ENCODE measurements at regions of chr9 and their contacts with region 1.

Region 1: DNA sequence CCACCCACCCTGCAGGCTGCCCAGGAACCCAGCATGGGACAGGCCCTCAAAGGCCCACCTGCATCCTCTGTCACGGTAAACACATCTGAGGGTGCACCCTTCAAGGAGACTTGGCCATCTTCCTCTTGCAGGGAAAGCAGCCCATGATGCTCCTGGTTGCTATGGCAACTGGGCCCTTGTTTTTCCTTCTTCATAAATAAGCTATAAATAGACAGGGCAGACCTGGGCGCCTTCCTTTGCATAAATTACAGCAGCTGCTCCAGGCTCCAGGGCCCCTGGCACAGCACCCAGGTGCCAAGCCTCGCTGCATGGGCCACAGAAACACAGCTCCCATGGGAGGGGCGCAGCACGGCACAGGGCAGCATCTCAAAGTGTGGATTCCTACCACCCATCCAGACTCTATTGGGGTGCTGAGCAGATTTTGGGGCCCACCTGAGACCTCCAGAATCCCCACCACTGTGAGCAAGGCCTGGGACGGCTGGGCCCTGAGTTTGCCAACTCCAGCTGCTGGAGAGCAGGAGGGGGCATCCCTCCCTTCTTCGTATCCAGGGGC is 5.8 kb upstream of the PSMB7 start:
- DNase-seq: no peak
- H3K4me3 ChIP-seq: no peak overlapping the region
- H3K27ac ChIP-seq: no peak overlapping the region
- H3K4me1 ChIP-seq: peaks cover 0 to 2% (median 0%) of the 10 kb centered on the region in 4 experiments; a peak in 3 of 7 replicates
- H3K27me3 ChIP-seq: peaks cover 0 to 3% (median 0%) of the 10 kb centered on the region in 4 experiments; a peak in 2 of 7 replicates
- CTCF ChIP-seq: no peak
- EP300 ChIP-seq: no peak
- POLR2A ChIP-seq: no peak
- RAD21 ChIP-seq: no peak

Region 2: GRCh38 chr9:124441291-124441690 is 20.2 kb after region 1 on chr9:
- CTCF ChIA-PET with region 1: interaction called, 87 read pairs
- POLR2A ChIA-PET with region 1: interaction called, 5 read pairs
- DNase-seq: no peak
- H3K4me3 ChIP-seq: no peak overlapping the region
- H3K27ac ChIP-seq: no peak overlapping the region
- H3K4me1 ChIP-seq: no peaks in the 10 kb centered on the region
- H3K27me3 ChIP-seq: no peaks in the 10 kb centered on the region; a peak in 1 of 7 replicates
- CTCF ChIP-seq: no peak
- EP300 ChIP-seq: no peak
- POLR2A ChIP-seq: no peak
- RAD21 ChIP-seq: no peak

Region 3: DNA sequence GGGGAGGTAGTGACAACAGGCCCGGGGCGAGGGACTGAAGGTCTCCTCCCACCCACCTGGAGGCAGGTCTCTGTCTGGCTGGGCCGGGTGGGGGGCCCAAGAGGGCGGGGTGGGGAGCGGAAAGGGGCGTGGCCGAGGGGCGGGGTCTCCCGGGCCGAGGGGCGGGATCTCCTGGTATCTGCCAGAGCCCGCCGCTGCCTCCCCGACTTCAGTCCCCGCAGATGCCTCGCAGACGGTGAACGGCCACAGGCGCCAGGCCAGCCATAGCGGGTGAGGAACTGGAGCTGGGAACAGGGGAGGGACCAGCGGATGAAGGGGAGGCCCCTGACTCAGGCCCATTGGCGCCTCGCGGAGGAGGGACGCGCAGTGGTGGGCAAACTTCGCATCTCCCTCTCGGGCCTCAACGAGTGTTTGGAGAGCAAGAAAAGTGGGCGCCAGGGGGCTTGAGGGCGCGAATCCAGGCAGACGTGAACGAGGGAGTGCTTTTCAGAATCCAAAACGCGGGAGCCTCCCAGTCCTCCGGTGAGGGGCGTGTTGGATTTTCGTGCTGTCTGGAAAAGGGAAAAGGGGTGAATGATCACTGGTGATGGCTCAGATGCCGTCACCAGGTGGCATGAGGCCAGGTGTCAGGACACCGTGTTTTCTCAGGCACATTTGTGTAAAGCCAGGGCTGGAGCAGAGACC is 29.3 kb after region 1 on chr9 and contains the start of gene ADGRD2:
- CTCF ChIA-PET with region 1: interaction called, 21 read pairs
- POLR2A ChIA-PET with region 1: no interaction called
- DNase-seq: peak; percentile 70 to 96
- H3K4me3 ChIP-seq: peak within 1 kb of the TSS; percentile 20 to 63 (median 42)
- H3K27ac ChIP-seq: no peak within 1 kb of the TSS; the same call in 1 of the 2 replicates
- H3K4me1 ChIP-seq: peaks cover 0 to 20% (median 14%) of the 10 kb centered on the region in 4 experiments; a peak in 6 of 7 replicates
- H3K27me3 ChIP-seq: peaks cover 10 to 33% (median 25%) of the 10 kb centered on the region in 4 experiments
- CTCF ChIP-seq: no peak
- EP300 ChIP-seq: no peak
- POLR2A ChIP-seq: peak in 1 of 2 experiments; percentile 69; a peak in 2 of 3 replicates
- RAD21 ChIP-seq: no peak; a peak in 1 of 4 replicates
- total RNA-seq, gene ADGRD2: 1.1 and 1.4 TPM in 2 replicates

Region 4: GRCh38 chr9:124475158-124475867 is 54.2 kb after region 1 on chr9:
- CTCF ChIA-PET with region 1: interaction called, 43 read pairs
- POLR2A ChIA-PET with region 1: no interaction called
- DNase-seq: no peak
- H3K4me3 ChIP-seq: no peak overlapping the region
- H3K27ac ChIP-seq: no peak overlapping the region
- H3K4me1 ChIP-seq: peaks cover 3 to 28% (median 21%) of the 10 kb centered on the region in 4 experiments
- H3K27me3 ChIP-seq: peaks cover 8 to 35% (median 32%) of the 10 kb centered on the region in 4 experiments
- CTCF ChIP-seq: peak in 2 of 3 experiments; percentile 64 to 69; a peak in 3 of 4 replicates
- EP300 ChIP-seq: no peak
- POLR2A ChIP-seq: no peak
- RAD21 ChIP-seq: peak; percentile 78 to 85

Region 5: GRCh38 chr9:124480621-124480981 is 59.5 kb after region 1 on chr9:
- CTCF ChIA-PET with region 1: interaction called, 43 read pairs
- POLR2A ChIA-PET with region 1: no interaction called
- DNase-seq: peak; percentile 44 to 80
- H3K4me3 ChIP-seq: no peak overlapping the region
- H3K27ac ChIP-seq: no peak overlapping the region
- H3K4me1 ChIP-seq: peaks cover 4 to 36% (median 30%) of the 10 kb centered on the region in 4 experiments
- H3K27me3 ChIP-seq: peaks cover 8 to 40% (median 38%) of the 10 kb centered on the region in 4 experiments
- CTCF ChIP-seq: peak in 2 of 3 experiments; percentile 71 to 79; a peak in 3 of 4 replicates
- EP300 ChIP-seq: no peak
- POLR2A ChIP-seq: no peak
- RAD21 ChIP-seq: peak; percentile 56 to 60

Region 6: DNA sequence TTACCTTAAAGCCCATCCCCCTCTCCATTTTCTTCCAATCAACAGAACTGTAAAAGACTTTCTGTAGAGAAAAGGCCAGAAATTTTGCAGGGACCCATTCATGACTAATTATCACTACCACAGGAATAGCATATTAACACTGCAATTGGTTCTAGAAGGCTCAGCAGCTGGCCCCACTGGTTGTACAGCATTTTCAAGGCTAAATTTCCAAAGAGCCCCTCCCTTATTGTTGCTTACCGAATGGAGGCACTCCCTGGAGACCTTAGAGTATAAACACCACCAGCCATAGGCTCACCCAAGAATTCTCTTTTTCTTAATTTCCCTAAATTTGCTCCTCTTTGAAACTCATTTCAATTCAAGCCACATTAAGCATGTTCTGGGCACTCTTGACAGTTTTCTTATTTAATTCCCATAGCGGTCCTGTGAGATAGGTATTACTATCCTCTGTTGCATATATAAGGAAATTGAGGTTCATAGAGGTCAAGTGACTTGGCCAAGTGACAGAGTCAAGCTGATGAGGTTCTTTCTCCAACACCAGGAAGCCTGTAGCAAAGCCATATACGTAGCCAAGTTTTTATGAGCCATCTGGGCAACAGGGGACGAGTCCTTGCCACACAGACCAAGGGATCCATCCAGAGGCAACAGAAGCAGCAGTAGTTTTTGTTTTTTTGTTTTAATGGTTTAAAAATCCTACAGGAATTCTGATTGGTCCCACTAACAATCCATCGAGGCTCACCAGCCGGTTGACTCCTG is 170.0 kb after region 1 on chr9:
- CTCF ChIA-PET with region 1: no interaction called
- POLR2A ChIA-PET with region 1: no interaction called
- DNase-seq: no peak
- H3K4me3 ChIP-seq: no peak overlapping the region; a peak in 1 of 8 replicates
- H3K27ac ChIP-seq: 0 out of 2 replicates have a peak overlapping the region, but pooled peaks have one; percentile 8
- H3K4me1 ChIP-seq: peaks cover 6 to 44% (median 25%) of the 10 kb centered on the region in 4 experiments
- H3K27me3 ChIP-seq: no peaks in the 10 kb centered on the region
- CTCF ChIP-seq: no peak
- EP300 ChIP-seq: no peak
- POLR2A ChIP-seq: no peak
- RAD21 ChIP-seq: no peak